ENCODE measurements at regions of chr5 and their contacts with region 1.

Region 1: DNA sequence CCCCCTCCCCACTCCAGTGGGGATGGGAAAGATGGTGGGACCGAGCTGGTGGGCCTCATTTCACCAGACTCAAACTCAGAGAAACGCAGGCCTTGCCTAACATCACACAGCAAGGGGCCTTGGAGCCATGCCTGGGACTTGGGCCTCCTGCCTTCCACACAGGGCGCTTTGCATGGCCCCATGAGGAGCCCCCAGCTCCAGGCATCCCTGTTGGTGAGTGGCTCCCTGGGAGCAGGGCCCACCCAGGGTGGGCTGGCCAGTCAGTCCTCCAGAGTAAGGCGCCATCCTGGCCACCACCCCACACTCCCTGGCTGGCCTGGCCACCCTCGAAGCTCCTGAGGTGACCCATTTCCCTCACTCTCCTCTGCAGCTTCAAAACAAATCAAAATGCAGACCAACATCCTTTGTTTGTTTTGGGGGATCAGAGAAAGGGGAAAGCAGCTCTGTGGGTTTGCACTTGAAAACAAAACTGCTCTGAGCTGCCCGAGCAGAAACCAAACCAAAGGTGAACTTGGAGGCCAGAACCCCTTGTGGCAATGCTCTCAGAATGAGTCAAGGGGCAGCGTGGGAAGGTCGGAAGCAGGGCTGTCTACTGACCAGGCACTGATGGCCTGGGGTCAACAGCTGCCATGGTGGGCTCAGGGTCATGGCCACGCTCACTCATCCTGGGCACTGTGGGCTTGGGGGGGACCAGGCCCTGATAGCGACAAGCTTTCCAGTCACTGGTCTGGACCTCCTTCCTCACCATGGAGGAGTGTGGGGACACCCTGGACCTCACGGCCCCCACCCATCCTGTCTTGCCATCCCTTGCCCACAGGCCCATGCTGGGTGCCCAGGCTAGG is 37.0 kb upstream of the VDAC1 start:
- DNase-seq: no peak
- H3K4me3 Mint-ChIP-seq: no peak overlapping the region
- H3K27ac Mint-ChIP-seq: no peak overlapping the region
- H3K4me1 Mint-ChIP-seq: peaks cover 39% of the 10 kb centered on the region
- H3K27me3 Mint-ChIP-seq: no peaks in the 10 kb centered on the region

Region 2: DNA sequence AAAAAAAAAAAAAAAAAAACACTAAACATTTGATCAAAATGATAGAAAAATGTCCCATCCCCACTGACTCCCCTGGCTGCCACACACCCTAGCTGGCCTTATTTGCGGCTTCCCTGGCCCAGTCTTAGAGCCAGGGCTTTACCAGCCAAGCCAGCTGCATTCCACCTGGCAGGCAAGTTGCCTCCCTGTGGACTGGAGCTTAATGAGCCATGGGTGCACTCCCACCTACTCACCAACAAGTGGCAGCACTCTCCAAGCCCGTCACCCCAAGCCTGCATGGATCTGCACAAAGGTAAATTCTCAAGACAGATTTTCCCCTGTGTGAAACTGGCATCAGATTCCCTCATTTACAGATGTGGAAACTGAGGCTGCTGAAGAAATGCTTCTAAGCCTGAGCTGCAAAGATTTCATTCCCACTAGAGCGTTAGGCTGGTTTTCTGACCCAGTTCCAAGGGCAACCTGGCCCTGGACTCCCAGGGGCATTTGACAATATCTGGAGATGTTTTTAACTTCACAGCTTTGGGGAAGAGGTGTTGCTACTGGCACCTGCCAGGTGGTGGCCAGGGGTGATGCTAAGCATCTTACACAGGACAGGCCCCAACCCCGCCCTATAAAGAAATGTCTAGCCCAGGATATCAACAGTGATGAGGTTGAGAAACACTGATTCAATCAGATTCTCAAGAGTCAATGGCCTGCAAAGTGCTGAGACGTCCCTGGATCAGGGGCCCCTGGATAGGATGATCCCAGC is 15.1 kb before region 1 on chr5:
- CTCF ChIA-PET with region 1: interaction called, 60 read pairs
- POLR2A ChIA-PET with region 1: no interaction called
- intact Hi-C with region 1: no loop called
- DNase-seq: peak; percentile 64
- H3K4me3 Mint-ChIP-seq: no peak overlapping the region
- H3K27ac Mint-ChIP-seq: no peak overlapping the region
- H3K4me1 Mint-ChIP-seq: no peaks in the 10 kb centered on the region
- H3K27me3 Mint-ChIP-seq: no peaks in the 10 kb centered on the region

Region 3: DNA sequence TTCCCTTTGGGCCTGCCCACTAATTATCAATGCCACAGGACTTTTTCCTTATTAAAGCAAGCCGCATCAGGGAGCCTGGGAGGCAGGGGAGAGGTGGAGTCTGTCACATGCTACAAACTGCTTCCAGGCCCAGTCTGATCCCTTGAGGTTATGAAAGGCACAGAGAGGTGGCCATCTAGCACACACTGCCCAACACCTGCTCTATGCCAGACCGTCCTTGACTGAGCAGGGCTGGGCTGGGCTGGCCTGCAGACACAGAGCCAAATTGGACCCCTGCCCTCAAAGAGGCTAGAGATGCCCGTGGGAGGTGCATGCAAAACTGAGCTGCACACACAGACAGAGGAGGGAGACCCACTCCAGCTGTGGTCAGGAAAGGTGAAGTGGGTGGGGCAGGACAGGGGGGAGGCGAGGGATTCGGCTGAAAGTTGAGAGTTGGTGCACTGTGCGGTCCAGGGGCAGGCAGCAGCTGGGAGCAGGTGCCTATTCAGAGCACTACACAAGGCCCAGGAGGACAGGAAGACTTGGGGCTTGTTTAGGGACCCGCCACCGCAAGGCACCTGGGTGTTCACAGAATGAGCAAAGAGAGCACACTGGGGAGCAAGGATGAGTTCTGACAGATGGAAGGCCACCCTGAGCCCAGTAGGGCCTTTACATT is 36.3 kb after region 1 on chr5:
- CTCF ChIA-PET with region 1: interaction called, 35 read pairs
- POLR2A ChIA-PET with region 1: no interaction called
- intact Hi-C with region 1: no loop called
- DNase-seq: peak; percentile 61
- H3K4me3 Mint-ChIP-seq: no peak overlapping the region
- H3K27ac Mint-ChIP-seq: peak overlapping the region; percentile 75
- H3K4me1 Mint-ChIP-seq: peaks cover 61% of the 10 kb centered on the region
- H3K27me3 Mint-ChIP-seq: no peaks in the 10 kb centered on the region

Region 4: GRCh38 chr5:134113902-134114875 is 72.4 kb after region 1 on chr5 and contains the start of gene TCF7:
- CTCF ChIA-PET with region 1: interaction called, 79 read pairs
- POLR2A ChIA-PET with region 1: interaction called, 3 read pairs
- intact Hi-C with region 1: loop called (anchors 2 kb)
- DNase-seq: peak; percentile 86
- H3K4me3 Mint-ChIP-seq: peak within 1 kb of the TSS; percentile 84
- H3K27ac Mint-ChIP-seq: peak within 1 kb of the TSS; percentile 86
- H3K4me1 Mint-ChIP-seq: peaks cover 66% of the 10 kb centered on the region
- H3K27me3 Mint-ChIP-seq: no peaks in the 10 kb centered on the region
- total RNA-seq, gene TCF7: 59.3 to 65.6 TPM

Region 5: DNA sequence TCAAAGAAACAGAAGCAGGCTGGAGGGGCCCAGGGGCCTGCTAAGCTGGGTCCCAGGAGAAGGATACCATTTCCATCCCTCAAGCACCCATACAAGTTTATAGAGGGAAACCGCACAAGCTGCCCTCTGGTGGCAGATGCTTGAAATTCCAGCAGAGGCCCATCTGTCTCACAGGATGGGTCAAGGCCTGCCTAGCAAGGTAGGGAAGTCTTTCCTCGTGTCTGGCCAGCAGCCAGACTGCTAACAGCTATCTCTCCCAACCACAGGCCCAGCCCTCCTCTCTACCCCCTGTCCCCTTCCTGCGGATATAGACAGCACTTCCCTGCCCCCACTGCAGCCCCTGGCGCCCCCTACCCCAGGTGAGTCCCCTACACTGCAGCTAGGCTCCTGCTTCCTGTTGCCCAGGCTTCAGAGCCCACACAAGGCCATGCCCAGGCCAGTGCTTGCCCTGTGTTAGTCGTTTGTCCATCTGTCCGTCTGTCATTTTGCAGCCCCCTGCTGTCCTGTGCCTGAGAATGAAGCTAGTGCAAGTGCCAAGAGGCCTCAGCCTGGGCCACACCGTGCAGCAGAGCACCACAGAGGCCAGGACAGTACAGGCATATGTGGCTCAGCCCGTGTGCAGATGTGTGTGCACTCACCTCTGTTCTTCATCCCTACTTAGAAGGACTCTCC is 98.9 kb after region 1 on chr5:
- CTCF ChIA-PET with region 1: interaction called, 981 read pairs
- POLR2A ChIA-PET with region 1: interaction called, 10 read pairs
- intact Hi-C with region 1: loop called (anchors 1 kb)
- DNase-seq: peak; percentile 81
- H3K4me3 Mint-ChIP-seq: no peak overlapping the region
- H3K27ac Mint-ChIP-seq: no peak overlapping the region
- H3K4me1 Mint-ChIP-seq: peaks cover 57% of the 10 kb centered on the region
- H3K27me3 Mint-ChIP-seq: no peaks in the 10 kb centered on the region

Region 6: DNA sequence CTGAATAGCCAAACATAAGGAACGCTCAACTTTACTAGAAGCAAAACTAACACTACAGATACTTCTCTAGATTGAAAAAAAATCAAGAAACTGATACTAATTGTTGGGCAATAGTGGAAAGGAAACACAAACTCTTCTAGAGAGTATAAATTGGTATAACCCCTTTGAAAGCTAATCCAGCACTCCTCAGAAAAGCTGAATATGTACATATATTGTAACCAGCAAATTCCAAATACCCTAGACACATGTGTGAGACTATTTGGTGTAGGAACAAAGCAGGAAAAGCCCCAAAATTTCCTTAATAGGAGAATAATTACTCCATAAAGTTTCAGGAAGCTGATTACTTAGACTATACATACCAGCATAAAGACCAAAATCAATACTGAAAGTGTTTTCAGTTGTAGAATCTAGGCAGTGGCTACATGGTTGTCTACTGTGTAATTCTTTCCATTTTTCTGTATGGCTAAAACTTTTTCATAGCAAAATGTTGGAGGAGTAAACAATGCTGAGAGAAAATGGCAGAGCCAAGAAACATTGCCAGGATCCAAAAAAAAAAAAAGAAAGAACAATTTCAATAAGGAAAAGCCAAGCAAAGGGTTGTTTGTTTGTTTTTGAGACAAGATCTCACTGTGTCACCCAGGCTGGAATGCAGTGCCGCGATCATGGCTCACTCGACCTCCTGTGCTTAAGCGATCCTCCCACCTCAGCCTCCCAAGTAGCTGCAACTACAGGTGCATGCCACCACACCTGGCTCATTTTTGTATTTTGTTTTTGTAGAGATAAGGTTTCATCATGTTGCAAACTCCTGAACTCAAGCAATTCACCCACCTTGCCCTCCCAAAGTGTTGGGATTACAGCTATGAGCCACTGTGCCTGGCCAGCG is 120.0 kb after region 1 on chr5:
- CTCF ChIA-PET with region 1: interaction called, 24 read pairs
- POLR2A ChIA-PET with region 1: no interaction called
- intact Hi-C with region 1: no loop called
- DNase-seq: no peak
- H3K4me3 Mint-ChIP-seq: no peak overlapping the region
- H3K27ac Mint-ChIP-seq: peak overlapping the region; percentile 72
- H3K4me1 Mint-ChIP-seq: peaks cover 35% of the 10 kb centered on the region
- H3K27me3 Mint-ChIP-seq: no peaks in the 10 kb centered on the region

Measured in activated CD4-positive, alpha-beta memory T cell treated with anti-CD3 and anti-CD28 coated beads for 36 hours (primary cell).